CD4-positive, alpha-beta memory T cell (primary cell): ENCODE measurements at regions of chr22 and their contacts with region 1.

Region 1: DNA sequence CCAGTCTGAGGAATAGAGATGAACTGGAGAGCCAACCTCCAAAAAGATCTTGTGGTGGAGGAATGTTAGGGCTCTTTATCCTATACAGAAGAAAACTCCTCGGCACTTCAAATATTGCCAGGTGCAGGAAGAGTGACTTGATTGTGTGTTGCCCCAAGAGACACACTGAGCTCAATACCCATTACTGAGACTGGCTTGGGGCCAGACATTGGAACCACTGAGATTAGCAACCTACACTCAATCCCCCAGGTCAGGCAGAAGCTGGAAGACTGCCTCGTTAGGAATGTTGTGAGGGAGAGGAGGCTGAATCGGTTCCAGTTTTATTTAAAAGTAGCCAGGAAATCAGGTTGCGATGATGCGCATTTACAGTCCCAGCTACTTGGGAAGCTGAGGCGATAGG is 2.4 kb upstream of the SGSM3 start:
- DNase-seq: no peak
- H3K4me3 ChIP-seq: no peak overlapping the region
- H3K4me3 Mint-ChIP-seq: no peak overlapping the region
- H3K27ac ChIP-seq: no peak overlapping the region
- H3K27ac Mint-ChIP-seq: peak overlapping the region in 2 of 7 donors; percentile 66 to 75
- H3K4me1 ChIP-seq: peaks cover 21% of the 10 kb centered on the region
- H3K4me1 Mint-ChIP-seq: peaks cover 15 to 17% (median 17%) of the 10 kb centered on the region in 4 donors
- H3K27me3 ChIP-seq: no peaks in the 10 kb centered on the region
- H3K27me3 Mint-ChIP-seq: no peaks in the 10 kb centered on the region

Region 2: DNA sequence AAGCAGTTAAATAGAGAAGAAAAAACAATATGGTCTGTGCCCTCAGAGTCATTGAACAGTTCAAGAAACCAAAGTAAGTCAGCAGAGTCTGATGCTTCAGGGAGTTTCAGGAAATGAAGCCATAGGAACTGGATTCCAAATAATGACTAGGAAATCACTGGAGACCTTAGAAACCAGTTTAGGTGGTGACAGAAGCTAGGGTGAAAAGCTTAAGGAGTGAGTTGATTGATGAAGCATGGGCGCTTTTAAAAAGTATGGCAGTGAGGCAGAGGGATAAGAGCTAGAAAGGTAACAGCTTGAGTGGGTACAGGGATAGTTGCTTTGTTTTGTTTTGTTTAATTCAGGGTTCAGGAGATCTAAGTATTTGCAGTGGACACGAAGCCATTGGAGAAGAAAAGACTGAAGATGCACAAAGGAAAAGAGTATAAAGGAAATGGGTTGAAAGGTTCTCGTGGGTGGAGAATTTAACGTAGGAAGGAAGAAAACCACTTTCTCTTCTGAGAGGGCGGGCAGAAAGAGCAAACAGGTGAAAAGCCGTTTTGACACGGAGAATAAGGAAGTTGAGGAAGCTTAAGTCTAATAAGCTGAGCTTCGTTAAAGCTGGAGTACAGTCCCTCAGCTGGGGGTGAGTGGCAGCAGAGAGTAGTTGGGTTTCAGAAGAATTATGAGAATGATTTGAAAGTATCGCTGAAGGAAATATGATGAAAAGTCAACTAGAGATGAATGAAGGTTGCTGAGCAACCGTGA is 17.2 kb after region 1 on chr22:
- CTCF ChIA-PET with region 1: interaction called, 4 read pairs
- POLR2A ChIA-PET with region 1: interaction called, 8 read pairs
- intact Hi-C with region 1: loop called (anchors 1 kb)
- DNase-seq: peak; percentile 48 to 63 (median 60)
- H3K4me3 ChIP-seq: peak overlapping the region in 1 of 2 donors; percentile 31
- H3K4me3 Mint-ChIP-seq: peak overlapping the region; percentile 74 to 90 (median 86)
- H3K27ac ChIP-seq: peak overlapping the region; percentile 47
- H3K27ac Mint-ChIP-seq: peak overlapping the region; percentile 78 to 99 (median 93)
- H3K4me1 ChIP-seq: peaks cover 25% of the 10 kb centered on the region
- H3K4me1 Mint-ChIP-seq: peaks cover 40 to 66% (median 52%) of the 10 kb centered on the region in 4 donors
- H3K27me3 ChIP-seq: no peaks in the 10 kb centered on the region
- H3K27me3 Mint-ChIP-seq: no peaks in the 10 kb centered on the region

Region 3: DNA sequence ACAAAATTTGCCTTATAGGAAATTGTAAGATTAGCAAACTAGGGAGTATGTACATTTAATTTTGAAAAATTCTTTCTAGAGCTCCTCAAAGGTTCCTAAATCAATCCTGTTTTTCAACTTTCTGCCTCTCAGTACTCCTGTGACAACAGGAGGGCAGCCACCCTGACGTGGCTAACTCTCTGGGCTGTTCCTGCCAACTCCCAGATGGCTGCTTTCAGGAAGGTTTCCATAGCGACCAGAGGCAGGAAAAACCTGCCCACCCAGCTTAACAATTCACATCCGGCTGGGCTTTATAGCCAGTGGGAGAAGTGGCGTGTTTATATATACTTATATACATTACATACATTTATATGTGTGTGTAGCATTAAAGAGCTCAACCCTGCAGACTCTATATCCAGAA is 28.9 kb after region 1 on chr22:
- CTCF ChIA-PET with region 1: interaction called, 4 read pairs
- POLR2A ChIA-PET with region 1: interaction called, 11 read pairs
- intact Hi-C with region 1: loop called (anchors 1 kb)
- DNase-seq: no peak
- H3K4me3 ChIP-seq: no peak overlapping the region
- H3K4me3 Mint-ChIP-seq: peak overlapping the region in 1 of 8 donors; percentile 27
- H3K27ac ChIP-seq: no peak overlapping the region
- H3K27ac Mint-ChIP-seq: peak overlapping the region in 5 of 7 donors; percentile 22 to 74 (median 43)
- H3K4me1 ChIP-seq: peaks cover 63% of the 10 kb centered on the region
- H3K4me1 Mint-ChIP-seq: peaks cover 50 to 86% (median 68%) of the 10 kb centered on the region in 4 donors
- H3K27me3 ChIP-seq: no peaks in the 10 kb centered on the region
- H3K27me3 Mint-ChIP-seq: no peaks in the 10 kb centered on the region